ENCODE measurements at regions of chr4 and their contacts with region 1.

Region 1: DNA sequence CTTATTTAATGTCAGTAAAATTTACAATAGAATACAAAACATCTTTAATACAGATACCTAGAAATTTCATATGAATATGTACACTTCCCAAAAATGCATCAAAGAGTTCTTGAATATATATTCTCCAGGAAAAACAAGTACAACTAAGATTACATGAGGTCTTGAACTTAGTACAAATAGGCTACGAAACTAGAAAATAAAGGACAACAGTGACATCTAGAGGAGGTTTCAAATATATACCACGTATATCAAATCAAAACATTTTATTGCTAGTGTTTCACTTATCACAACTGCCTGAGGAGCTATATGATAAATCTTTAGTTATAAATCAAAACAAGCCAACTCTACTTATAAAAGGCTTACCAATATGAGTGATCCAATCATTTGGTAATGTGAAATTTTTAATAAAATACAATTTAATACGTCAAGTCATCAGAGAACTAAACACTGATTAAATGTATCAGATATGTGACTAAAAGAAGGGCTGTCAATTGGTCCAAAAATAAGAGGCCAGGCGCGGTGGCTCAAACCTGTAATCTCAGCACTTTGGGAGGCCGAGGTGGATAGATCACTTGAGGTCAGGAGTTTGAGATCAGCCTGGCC is 36.6 kb downstream of the ANAPC10 start:
- DNase-seq: peak in 6 of 9 donors; percentile 14 to 54 (median 39)
- ATAC-seq: peak; percentile 75
- H3K4me3 ChIP-seq: no peak overlapping the region
- H3K4me3 Mint-ChIP-seq: no peak overlapping the region
- H3K27ac ChIP-seq: no peak overlapping the region
- H3K27ac Mint-ChIP-seq: no peak overlapping the region
- H3K4me1 ChIP-seq: peaks cover 0 to 5% of the 10 kb centered on the region in 2 donors
- H3K4me1 Mint-ChIP-seq: peaks cover 4 to 34% (median 28%) of the 10 kb centered on the region in 7 donors
- H3K27me3 ChIP-seq: no peaks in the 10 kb centered on the region
- H3K27me3 Mint-ChIP-seq: no peaks in the 10 kb centered on the region

Region 2: DNA sequence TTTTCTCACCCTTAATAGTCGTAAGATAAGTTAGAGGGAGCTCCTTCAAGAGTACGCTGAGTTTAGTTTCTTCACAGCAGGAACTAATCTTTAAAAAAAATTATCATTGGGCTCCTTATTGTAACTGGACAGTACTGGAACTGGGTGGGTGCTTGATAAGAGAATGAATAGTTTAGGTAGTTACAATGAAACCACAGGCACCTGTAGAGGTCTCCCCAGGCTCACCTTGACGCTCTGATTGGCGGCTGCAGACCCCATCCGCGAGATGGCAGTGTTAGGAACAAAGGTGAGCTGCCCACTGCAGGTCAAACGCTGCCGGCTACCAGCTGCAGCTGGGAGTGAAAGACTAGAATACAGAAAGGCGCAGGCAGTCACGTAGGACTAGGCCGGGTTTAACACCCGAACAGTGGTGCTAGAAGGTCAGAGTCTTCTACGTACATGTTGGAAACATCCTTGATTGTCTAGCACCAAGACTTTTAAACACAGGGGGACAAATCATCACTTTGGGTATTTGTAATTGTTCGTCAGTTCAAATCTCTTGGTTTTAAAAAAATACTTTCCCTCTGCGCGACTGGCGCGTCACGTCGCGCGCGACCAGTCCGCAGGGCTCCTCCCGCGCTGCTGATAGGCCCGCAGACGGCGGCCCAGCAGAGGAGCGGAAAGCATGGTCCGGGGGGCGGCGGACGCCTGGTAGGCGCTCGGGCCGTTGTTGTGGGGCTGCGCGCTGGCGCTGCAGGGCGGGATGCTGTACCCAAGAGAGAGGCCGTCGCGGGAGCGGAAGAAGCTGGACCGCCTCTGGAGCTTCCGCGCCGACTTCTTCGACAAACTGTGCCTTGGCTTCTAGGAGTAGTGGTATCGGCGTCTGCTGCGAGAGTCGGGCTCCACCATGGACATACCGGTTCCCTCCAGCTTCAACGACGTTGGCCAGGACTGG is 1502.3 kb before region 1 on chr4:
- CTCF ChIA-PET with region 1: no interaction called
- POLR2A ChIA-PET with region 1: no interaction called
- intact Hi-C with region 1: loop called in 1 of 2 experiments (anchors 1 kb)
- DNase-seq: peak; percentile 38 to 80 (median 58)
- ATAC-seq: peak; percentile 86
- H3K4me3 ChIP-seq: peak overlapping the region; percentile 79
- H3K4me3 Mint-ChIP-seq: peak overlapping the region; percentile 87 to 97 (median 90)
- H3K27ac ChIP-seq: peak overlapping the region; percentile 52
- H3K27ac Mint-ChIP-seq: peak overlapping the region; percentile 78 to 96 (median 91)
- H3K4me1 ChIP-seq: peaks cover 7 to 11% of the 10 kb centered on the region in 2 donors
- H3K4me1 Mint-ChIP-seq: peaks cover 8 to 40% (median 28%) of the 10 kb centered on the region in 7 donors
- H3K27me3 ChIP-seq: no peaks in the 10 kb centered on the region
- H3K27me3 Mint-ChIP-seq: no peaks in the 10 kb centered on the region

Region 3: GRCh38 chr4:144174401-144175067 is 886.9 kb before region 1 on chr4:
- CTCF ChIA-PET with region 1: no interaction called
- POLR2A ChIA-PET with region 1: no interaction called
- intact Hi-C with region 1: loop called (anchors 1 kb)
- DNase-seq: peak in 7 of 9 donors; percentile 10 to 62 (median 45)
- ATAC-seq: peak; percentile 63
- H3K4me3 ChIP-seq: no peak overlapping the region
- H3K4me3 Mint-ChIP-seq: peak overlapping the region in 1 of 10 donors; percentile 44
- H3K27ac ChIP-seq: no peak overlapping the region
- H3K27ac Mint-ChIP-seq: peak overlapping the region in 3 of 9 donors; percentile 25 to 84 (median 41)
- H3K4me1 ChIP-seq: peaks cover 0 to 3% of the 10 kb centered on the region in 2 donors
- H3K4me1 Mint-ChIP-seq: peaks cover 0 to 29% (median 4%) of the 10 kb centered on the region in 7 donors
- H3K27me3 ChIP-seq: no peaks in the 10 kb centered on the region
- H3K27me3 Mint-ChIP-seq: peaks cover 0 to 11% (median 9%) of the 10 kb centered on the region in 5 donors

Region 4: GRCh38 chr4:144591401-144591800 is 470.0 kb before region 1 on chr4:
- CTCF ChIA-PET with region 1: no interaction called
- POLR2A ChIA-PET with region 1: no interaction called
- intact Hi-C with region 1: no loop called
- DNase-seq: no peak
- ATAC-seq: no peak
- H3K4me3 ChIP-seq: no peak overlapping the region
- H3K4me3 Mint-ChIP-seq: no peak overlapping the region
- H3K27ac ChIP-seq: no peak overlapping the region
- H3K27ac Mint-ChIP-seq: no peak overlapping the region
- H3K4me1 ChIP-seq: no peaks in the 10 kb centered on the region
- H3K4me1 Mint-ChIP-seq: no peaks in the 10 kb centered on the region
- H3K27me3 ChIP-seq: no peaks in the 10 kb centered on the region
- H3K27me3 Mint-ChIP-seq: peaks cover 0 to 10% (median 3%) of the 10 kb centered on the region in 5 donors

Region 5: DNA sequence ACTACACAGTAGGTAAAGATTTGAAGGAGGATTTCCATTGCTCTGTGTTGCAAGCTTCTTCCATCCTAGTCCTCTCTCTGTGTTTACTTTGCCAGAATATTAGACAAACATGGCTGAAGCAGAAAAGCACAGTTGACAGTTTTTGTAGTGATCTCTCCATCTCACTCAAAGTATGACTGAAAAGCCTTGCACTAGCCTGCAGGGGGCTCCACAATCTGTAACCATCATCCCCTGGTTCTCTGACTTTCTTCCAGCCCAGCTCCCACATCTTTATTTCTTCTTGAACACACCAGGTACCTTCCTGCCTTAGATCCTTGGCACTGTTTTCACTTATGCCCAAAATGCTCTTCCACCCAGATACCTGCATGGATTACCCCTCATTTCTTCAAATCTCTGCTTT is 449.6 kb before region 1 on chr4:
- CTCF ChIA-PET with region 1: no interaction called
- POLR2A ChIA-PET with region 1: no interaction called
- intact Hi-C with region 1: loop called in 1 of 2 experiments (anchors 1 kb)
- DNase-seq: no peak
- ATAC-seq: no peak
- H3K4me3 ChIP-seq: no peak overlapping the region
- H3K4me3 Mint-ChIP-seq: no peak overlapping the region
- H3K27ac ChIP-seq: no peak overlapping the region
- H3K27ac Mint-ChIP-seq: no peak overlapping the region
- H3K4me1 ChIP-seq: no peaks in the 10 kb centered on the region
- H3K4me1 Mint-ChIP-seq: no peaks in the 10 kb centered on the region
- H3K27me3 ChIP-seq: no peaks in the 10 kb centered on the region
- H3K27me3 Mint-ChIP-seq: peaks cover 3 to 20% (median 10%) of the 10 kb centered on the region in 5 donors

Region 6: DNA sequence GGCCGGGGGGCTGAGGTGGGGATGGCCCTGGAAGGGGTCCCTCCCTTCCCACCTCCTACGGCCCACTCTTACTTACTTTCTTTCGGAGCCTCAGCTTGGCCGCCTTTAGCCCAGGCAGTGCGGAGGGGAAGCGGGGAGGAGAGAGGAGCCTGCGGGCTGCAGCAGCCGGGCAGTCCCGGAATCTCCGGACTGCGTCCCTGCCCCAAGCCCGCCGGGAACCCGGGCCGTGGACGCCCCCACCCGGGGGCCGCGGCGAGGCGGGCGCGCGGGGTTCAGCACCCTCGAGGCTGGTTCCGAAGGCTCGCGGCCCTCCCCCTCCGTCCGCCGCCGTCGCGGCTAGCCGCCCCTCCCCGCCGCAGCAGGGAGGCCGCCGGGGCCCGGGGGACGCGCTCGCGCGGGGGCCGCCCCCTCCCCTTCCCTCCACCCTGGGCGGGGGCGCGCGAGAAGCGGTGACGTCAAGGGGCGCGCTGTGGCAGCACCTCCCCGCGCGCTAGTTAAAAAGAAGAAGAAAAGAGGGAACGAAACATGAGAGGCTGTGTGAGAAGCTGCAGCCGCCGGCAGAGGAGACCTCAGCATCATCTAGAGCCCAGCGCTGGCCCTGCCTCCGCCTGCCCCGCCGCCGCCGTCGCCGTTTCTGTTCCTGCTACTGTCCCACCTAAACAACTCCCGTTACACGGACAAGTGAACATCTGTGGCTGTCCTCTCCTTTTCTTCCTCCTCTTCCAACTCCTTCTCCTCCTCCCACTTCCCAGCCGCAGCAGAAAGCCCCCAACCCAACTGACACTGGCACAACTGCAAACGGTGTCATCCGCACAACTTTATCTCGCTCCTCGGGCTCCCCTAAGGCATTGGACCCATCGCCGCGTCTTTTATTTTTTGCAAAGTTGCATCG is 415.5 kb before region 1 on chr4 and contains the start of gene HHIP:
- CTCF ChIA-PET with region 1: no interaction called
- POLR2A ChIA-PET with region 1: no interaction called
- intact Hi-C with region 1: loop called in 1 of 2 experiments (anchors 10 kb)
- DNase-seq: peak in 7 of 9 donors; percentile 2 to 47 (median 32)
- ATAC-seq: peak; percentile 70
- H3K4me3 ChIP-seq: no peak within 1 kb of the TSS
- H3K4me3 Mint-ChIP-seq: peak within 1 kb of the TSS; percentile 78 to 91 (median 86)
- H3K27ac ChIP-seq: no peak within 1 kb of the TSS
- H3K27ac Mint-ChIP-seq: no peak within 1 kb of the TSS
- H3K4me1 ChIP-seq: no peaks in the 10 kb centered on the region
- H3K4me1 Mint-ChIP-seq: peaks cover 10 to 27% (median 23%) of the 10 kb centered on the region in 7 donors
- H3K27me3 ChIP-seq: peaks cover 0 to 11% of the 10 kb centered on the region in 2 donors
- H3K27me3 Mint-ChIP-seq: peaks cover 52 to 64% (median 61%) of the 10 kb centered on the region in 5 donors
- total RNA-seq, gene HHIP: 0.19 TPM in 1 of 5 experiments, not detected in the others

Region 7: GRCh38 chr4:144787365-144788258 is 273.8 kb before region 1 on chr4:
- CTCF ChIA-PET with region 1: no interaction called
- POLR2A ChIA-PET with region 1: no interaction called
- intact Hi-C with region 1: loop called in 1 of 2 experiments (anchors 2 kb)
- DNase-seq: peak in 1 of 9 donors; percentile 2
- ATAC-seq: no peak
- H3K4me3 ChIP-seq: no peak overlapping the region
- H3K4me3 Mint-ChIP-seq: no peak overlapping the region
- H3K27ac ChIP-seq: no peak overlapping the region
- H3K27ac Mint-ChIP-seq: peak overlapping the region in 1 of 9 donors; percentile 2
- H3K4me1 ChIP-seq: no peaks in the 10 kb centered on the region
- H3K4me1 Mint-ChIP-seq: peaks cover 0 to 3% (median 0%) of the 10 kb centered on the region in 7 donors
- H3K27me3 ChIP-seq: no peaks in the 10 kb centered on the region
- H3K27me3 Mint-ChIP-seq: peaks cover 0 to 8% (median 5%) of the 10 kb centered on the region in 5 donors

Region 8: GRCh38 chr4:145019346-145019745 is 42.1 kb before region 1 on chr4:
- CTCF ChIA-PET with region 1: interaction called, 4 read pairs
- POLR2A ChIA-PET with region 1: no interaction called
- intact Hi-C with region 1: loop called in 1 of 2 experiments (anchors 5 kb)
- DNase-seq: peak in 2 of 9 donors; percentile 1 to 5
- ATAC-seq: no peak
- H3K4me3 ChIP-seq: no peak overlapping the region
- H3K4me3 Mint-ChIP-seq: peak overlapping the region in 9 of 10 donors; percentile 0 to 78 (median 52)
- H3K27ac ChIP-seq: peak overlapping the region; percentile 29
- H3K27ac Mint-ChIP-seq: peak overlapping the region in 8 of 9 donors; percentile 50 to 93 (median 74)
- H3K4me1 ChIP-seq: peaks cover 6 to 11% of the 10 kb centered on the region in 2 donors
- H3K4me1 Mint-ChIP-seq: peaks cover 16 to 52% (median 40%) of the 10 kb centered on the region in 7 donors
- H3K27me3 ChIP-seq: no peaks in the 10 kb centered on the region
- H3K27me3 Mint-ChIP-seq: no peaks in the 10 kb centered on the region

Region 9: DNA sequence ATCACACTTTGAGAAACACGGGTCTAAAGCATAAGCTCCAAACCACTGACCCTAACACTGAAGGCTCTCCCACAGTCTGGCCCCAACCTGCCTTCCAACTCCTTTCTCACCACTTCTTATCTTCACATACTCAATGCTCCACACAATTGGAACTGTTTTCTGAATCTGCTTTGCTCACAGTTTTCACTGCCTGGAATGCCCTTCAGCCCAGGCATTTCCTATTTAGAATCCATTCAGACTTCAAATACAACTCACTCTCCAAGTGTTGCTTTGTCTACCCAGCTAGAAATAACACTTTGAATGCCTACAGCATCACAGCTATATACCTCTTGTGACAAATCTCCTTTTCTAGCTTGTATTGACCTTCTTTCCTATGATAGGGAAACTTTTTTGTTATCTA is 108.8 kb after region 1 on chr4:
- CTCF ChIA-PET with region 1: no interaction called
- POLR2A ChIA-PET with region 1: no interaction called
- intact Hi-C with region 1: no loop called
- DNase-seq: no peak
- ATAC-seq: no peak
- H3K4me3 ChIP-seq: no peak overlapping the region
- H3K4me3 Mint-ChIP-seq: no peak overlapping the region
- H3K27ac ChIP-seq: no peak overlapping the region
- H3K27ac Mint-ChIP-seq: peak overlapping the region in 1 of 9 donors; percentile 21
- H3K4me1 ChIP-seq: peaks cover 4 to 6% of the 10 kb centered on the region in 2 donors
- H3K4me1 Mint-ChIP-seq: peaks cover 15 to 48% (median 36%) of the 10 kb centered on the region in 7 donors
- H3K27me3 ChIP-seq: no peaks in the 10 kb centered on the region
- H3K27me3 Mint-ChIP-seq: no peaks in the 10 kb centered on the region

Measured in naive thymus-derived CD4-positive, alpha-beta T cell (primary cell).